ENCODE measurements at regions of chr19 and their contacts with region 1.

Region 1: DNA sequence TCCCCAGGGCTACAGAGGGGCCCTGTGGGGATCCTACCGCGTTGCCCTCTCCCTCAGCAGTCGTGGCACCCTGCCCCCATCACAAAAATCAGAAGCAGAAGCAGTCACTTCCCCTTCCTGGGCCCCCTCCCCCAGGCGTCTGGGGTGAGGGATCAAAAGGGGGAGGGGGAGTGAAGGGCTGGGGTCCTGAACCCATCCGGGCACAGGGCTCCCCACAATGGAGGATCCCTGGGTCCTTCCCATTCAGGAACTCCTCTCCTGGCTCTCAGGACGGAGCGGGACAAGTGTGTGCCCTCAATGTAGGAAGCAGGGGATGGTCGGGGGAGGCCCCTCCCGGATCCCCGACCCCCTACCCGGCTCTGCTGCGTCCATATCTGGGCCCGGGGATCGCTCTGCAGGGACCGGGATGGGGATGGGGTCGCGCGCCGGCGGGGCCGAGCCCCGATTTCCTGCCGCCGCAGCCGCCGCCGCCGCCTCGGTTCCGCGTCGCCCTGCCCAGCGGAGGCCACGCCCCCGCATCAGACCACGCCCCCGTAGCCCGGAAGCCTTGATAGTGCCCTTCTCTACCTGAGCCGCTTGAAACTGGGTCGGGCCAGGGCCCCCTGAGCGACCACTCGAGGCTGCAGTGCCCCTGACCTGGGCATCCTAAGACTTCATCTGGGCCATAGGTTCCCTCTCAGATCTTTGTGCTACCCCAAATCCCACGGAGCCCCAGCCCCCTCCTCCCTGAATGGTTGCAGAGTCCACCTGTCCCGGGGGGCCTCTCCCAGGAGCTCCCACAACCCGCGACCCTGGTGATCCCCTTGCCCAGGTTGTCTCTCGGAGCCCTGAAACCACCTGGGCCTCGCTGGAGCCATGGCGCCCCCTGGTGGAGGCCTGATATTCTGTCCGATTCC is at the start of gene GMIP:
- DNase-seq: peak; percentile 93
- H3K4me3 ChIP-seq: peak within 1 kb of the TSS; percentile 71 to 98
- H3K27ac ChIP-seq: peak within 1 kb of the TSS in 1 of 2 experiments; percentile 75; a peak in 2 of 4 replicates
- H3K4me1 ChIP-seq: peaks cover 0 to 8% of the 10 kb centered on the region in 2 experiments; a peak in 1 of 4 replicates
- H3K27me3 ChIP-seq: no peaks in the 10 kb centered on the region
- CTCF ChIP-seq: peak; percentile 97
- EP300 ChIP-seq: no peak
- RAD21 ChIP-seq: peak; percentile 82
- polyA plus RNA-seq, gene GMIP: 5.3 and 6.3 TPM in 2 replicates

Region 2: DNA sequence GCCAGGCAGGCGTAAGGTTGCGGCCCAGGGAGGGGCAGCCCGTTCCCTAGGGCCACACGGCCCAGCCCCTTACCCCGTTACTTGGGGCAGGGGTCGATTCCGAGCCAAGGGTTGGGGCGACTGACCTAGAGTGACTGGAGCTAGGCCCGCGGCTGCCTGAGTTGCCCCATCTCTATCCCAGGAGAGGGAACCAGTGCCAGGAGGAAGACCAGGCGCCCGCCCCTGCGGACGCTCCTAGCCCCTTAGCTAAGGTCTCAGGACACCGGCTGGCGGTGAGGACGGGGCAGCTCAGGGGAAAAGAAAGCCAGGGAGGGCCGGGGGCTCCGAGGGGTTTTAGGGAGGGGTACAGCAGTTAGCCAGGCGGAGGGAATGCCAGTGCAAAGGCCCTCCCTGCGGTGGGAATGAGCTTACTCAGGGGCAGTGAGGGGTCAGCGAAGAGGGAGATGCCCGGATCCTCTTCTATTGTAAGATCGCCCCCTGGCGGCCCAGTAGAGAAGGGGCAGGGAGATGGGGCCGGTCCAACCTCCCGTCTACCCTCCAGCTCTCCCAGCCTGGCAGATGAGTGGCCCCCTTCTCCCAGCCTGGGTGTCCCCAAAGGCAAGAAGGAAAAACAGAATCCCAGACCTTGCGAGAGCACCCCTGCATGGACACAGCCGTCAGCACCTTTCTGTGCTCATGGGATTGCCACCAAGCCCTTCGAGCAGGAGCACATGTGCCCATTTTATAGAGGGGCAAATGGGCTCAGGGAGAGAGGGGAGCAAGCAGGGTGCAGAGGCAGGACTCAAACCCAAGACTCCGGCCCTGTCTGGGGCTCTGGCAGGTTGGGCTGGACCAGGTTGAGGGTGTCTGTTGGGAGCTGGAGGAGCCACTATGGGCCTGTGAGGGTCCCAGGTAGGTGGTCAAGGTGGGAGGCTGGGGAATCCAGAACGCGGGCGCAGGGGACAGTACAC is 89.1 kb before region 1 on chr19:
- CTCF ChIA-PET with region 1: interaction called, 28 read pairs
- POLR2A ChIA-PET with region 1: no interaction called
- DNase-seq: peak; percentile 86
- H3K4me3 ChIP-seq: no peak overlapping the region
- H3K27ac ChIP-seq: no peak overlapping the region
- H3K4me1 ChIP-seq: no peaks in the 10 kb centered on the region; a peak in 1 of 4 replicates
- H3K27me3 ChIP-seq: no peaks in the 10 kb centered on the region
- CTCF ChIP-seq: peak; percentile 69
- EP300 ChIP-seq: no peak
- RAD21 ChIP-seq: peak; percentile 57

Region 3: DNA sequence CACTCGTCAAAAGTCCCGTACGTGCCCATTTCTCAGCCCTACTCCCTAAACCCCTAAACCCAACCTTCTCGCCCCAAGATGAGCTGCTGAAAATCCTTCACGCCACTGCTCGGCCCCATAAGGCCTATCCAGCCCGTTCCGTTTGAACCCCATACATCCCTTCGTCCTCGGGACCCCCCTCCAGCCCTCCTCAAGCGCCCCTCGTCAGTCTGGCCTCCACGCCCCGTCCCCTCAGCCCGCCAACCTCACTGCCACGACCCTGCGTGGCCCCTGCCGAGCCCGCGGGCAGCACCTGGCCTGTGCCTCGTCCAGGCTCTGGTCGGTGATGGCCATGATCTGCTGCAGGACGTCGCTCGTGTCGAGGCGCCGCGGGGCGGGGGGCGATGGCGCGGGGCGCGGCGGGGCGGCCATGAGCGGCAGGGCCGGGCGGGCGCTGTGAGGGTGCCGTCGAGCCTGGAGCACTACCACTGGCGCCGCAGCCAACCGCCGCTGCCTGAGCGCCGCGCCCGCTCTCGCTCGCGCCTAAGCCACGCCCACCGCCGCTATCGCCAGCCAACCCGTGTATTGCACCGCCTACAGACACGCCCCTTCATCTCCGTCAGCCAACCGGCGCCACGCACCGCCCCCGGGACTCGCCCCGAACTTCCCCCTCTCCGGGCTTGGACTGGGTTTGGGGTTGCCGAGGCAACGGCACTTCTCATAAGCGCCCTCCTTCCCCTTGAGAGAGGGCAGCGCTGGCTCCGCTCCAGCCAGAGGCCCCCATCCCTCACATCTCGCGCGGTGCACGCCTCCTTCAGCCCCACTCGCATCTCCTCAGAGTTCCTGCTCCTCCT is 25.0 kb before region 1 on chr19 and contains the start of gene PBX4:
- CTCF ChIA-PET with region 1: interaction called, 10 read pairs
- POLR2A ChIA-PET with region 1: no interaction called
- DNase-seq: peak; percentile 99
- H3K4me3 ChIP-seq: peak within 1 kb of the TSS; percentile 51 to 74
- H3K27ac ChIP-seq: peak within 1 kb of the TSS in 1 of 2 experiments; percentile 51; a peak in 2 of 4 replicates
- H3K4me1 ChIP-seq: peaks cover 4% of the 10 kb centered on the region in 2 experiments; a peak in 2 of 4 replicates
- H3K27me3 ChIP-seq: no peaks in the 10 kb centered on the region
- CTCF ChIP-seq: no peak
- EP300 ChIP-seq: no peak
- RAD21 ChIP-seq: no peak
- polyA plus RNA-seq, gene PBX4: 5.1 and 6.4 TPM in 2 replicates

Region 4: GRCh38 chr19:19627621-19628500 is 15.5 kb before region 1 on chr19 and contains the start of gene LPAR2:
- CTCF ChIA-PET with region 1: interaction called, 28 read pairs
- POLR2A ChIA-PET with region 1: no interaction called
- DNase-seq: peak; percentile 96
- H3K4me3 ChIP-seq: peak within 1 kb of the TSS in 1 of 2 experiments; percentile 56; a peak in 2 of 4 replicates
- H3K27ac ChIP-seq: peak within 1 kb of the TSS in 1 of 2 experiments; percentile 65; a peak in 1 of 4 replicates
- H3K4me1 ChIP-seq: peaks cover 0 to 13% of the 10 kb centered on the region in 2 experiments; a peak in 1 of 4 replicates
- H3K27me3 ChIP-seq: no peaks in the 10 kb centered on the region
- CTCF ChIP-seq: no peak
- EP300 ChIP-seq: no peak
- RAD21 ChIP-seq: no peak
- polyA plus RNA-seq, gene LPAR2: 4.3 and 4.5 TPM in 2 replicates

Region 5: GRCh38 chr19:19657397-19657783 is 14.0 kb after region 1 on chr19:
- CTCF ChIA-PET with region 1: interaction called, 45 read pairs
- POLR2A ChIA-PET with region 1: interaction called, 3 read pairs
- DNase-seq: peak; percentile 54
- H3K4me3 ChIP-seq: no peak overlapping the region
- H3K27ac ChIP-seq: no peak overlapping the region; a peak in 1 of 4 replicates
- H3K4me1 ChIP-seq: peaks cover 0 to 14% of the 10 kb centered on the region in 2 experiments; a peak in 2 of 4 replicates
- H3K27me3 ChIP-seq: no peaks in the 10 kb centered on the region
- CTCF ChIP-seq: no peak
- EP300 ChIP-seq: no peak
- RAD21 ChIP-seq: no peak

Region 6: GRCh38 chr19:19663256-19664038 is 20.0 kb after region 1 on chr19 and contains the start of gene ATP13A1:
- CTCF ChIA-PET with region 1: interaction called, 45 read pairs
- POLR2A ChIA-PET with region 1: no interaction called
- DNase-seq: peak; percentile 93
- H3K4me3 ChIP-seq: peak within 1 kb of the TSS; percentile 83 to 90
- H3K27ac ChIP-seq: peak within 1 kb of the TSS; percentile 88 to 92
- H3K4me1 ChIP-seq: peaks cover 0 to 20% of the 10 kb centered on the region in 2 experiments; a peak in 2 of 4 replicates
- H3K27me3 ChIP-seq: no peaks in the 10 kb centered on the region
- CTCF ChIP-seq: 0 out of 2 replicates have a peak, but pooled peaks have one; percentile 18
- EP300 ChIP-seq: no peak
- RAD21 ChIP-seq: no peak
- polyA plus RNA-seq, gene ATP13A1: 49.6 and 67.9 TPM in 2 replicates

Measured in SK-N-SH (cell line).